ENCODE measurements at regions of chr3 and their contacts with region 1.

Region 1: DNA sequence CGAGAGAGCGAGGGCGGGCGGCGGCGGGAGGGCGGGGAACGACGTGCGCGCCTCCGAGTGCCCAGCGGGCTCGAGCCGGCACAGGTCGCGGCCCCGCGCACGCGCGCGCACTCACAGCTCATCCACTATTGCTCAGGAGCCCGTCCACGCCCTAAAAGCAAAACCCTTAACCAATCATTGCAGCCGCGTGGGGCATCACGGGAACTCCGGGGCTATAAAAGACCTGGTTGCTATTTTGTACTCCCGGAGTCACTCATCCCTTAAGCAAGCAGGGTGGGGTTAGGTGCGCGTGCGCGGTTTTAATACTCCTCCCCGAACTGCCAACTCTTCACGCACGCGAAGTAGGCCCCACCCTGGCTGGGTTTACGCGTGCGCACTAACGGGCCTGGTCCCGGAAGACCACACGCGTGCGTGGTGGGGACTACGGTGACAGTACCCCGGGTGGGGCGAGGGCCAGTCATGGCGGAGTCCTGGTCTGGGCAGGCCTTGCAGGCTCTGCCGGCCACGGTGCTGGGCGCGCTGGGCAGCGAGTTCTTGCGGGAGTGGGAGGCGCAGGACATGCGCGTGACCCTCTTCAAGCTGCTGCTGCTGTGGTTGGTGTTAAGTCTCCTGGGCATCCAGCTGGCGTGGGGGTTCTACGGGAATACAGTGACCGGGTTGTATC is at the starts of genes RHOA and TCTA:
- DNase-seq: peak; percentile 97
- ATAC-seq: peak; percentile 93
- H3K4me3 ChIP-seq: peak within 1 kb of the TSS; percentile 84 to 93
- H3K27ac ChIP-seq: peak within 1 kb of the TSS; percentile 90
- H3K4me1 ChIP-seq: peaks cover 17% of the 10 kb centered on the region
- H3K27me3 ChIP-seq: no peaks in the 10 kb centered on the region
- CTCF ChIP-seq: no peak
- total RNA-seq, gene RHOA: 296 TPM
- total RNA-seq, gene TCTA: 17.6 TPM

Region 2: GRCh38 chr3:48556793-48557626 is 855.1 kb before region 1 on chr3 and contains the start of gene PFKFB4:
- CTCF ChIA-PET with region 1: no interaction called
- POLR2A ChIA-PET with region 1: interaction called, 15 read pairs
- in situ Hi-C with region 1: no loop called
- intact Hi-C with region 1: no loop called
- DNase-seq: peak; percentile 95
- ATAC-seq: peak; percentile 94
- H3K4me3 ChIP-seq: peak within 1 kb of the TSS; percentile 59 to 65
- H3K27ac ChIP-seq: peak within 1 kb of the TSS; percentile 77
- H3K4me1 ChIP-seq: no peaks in the 10 kb centered on the region
- H3K27me3 ChIP-seq: no peaks in the 10 kb centered on the region
- CTCF ChIP-seq: no peak
- total RNA-seq, gene PFKFB4: 6.0 TPM